Ascending aorta (tissue), 2 donors: ENCODE measurements at regions of chr7 and their contacts with region 1.

Region 1: GRCh38 chr7:47690902-47691558 is 109.1 kb upstream of the TNS3 start:
- DNase-seq: no peak
- H3K4me3 ChIP-seq: no peak overlapping the region
- H3K27ac ChIP-seq: peak overlapping the region; percentile 75 to 77
- H3K4me1 ChIP-seq: peaks cover 3 to 28% of the 10 kb centered on the region in 2 donors
- H3K27me3 ChIP-seq: no peaks in the 10 kb centered on the region
- CTCF ChIP-seq: no peak

Region 2: DNA sequence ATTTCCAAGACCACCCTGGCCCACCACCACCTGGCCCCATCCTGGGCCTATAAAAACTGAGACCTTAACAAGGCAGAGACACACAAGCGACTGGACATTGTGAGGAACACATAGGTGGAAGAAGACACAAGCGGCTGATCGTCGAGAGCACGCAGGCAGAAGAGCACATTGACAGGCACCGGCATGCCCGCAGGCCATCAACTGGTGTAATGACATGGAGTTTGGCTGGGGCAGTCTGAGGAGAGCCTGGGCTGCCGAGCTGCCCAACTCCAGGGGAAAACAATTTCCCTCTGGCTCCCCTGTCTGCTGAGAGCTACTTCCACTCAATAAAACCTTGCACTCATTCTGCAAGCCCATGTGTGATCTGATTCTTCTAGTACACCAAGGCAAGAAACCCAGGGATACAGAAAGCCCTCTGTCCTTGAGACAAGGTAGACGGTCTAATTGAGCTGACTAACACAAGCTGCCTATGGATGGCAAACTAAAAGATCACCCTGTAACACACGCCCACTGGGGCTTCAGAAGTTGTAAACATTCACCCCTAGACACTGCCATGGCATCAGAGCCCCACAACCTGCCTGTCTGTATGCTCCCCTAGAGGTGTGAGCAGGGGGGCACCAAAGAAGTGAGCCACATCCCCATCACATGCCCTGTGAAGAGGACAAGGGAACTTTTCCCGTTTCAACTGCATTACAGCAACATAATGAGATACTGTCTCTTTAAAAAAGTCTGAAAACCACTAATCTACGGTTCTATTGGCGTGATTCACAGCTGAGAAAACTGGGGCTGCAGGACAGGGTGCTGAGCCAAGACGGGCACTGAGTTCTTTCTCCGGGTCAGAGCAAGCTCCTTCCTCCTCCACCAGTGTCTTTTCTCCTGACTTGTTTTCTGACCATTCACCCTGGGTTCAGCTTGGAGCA is 90.6 kb before region 1 on chr7:
- intact Hi-C with region 1: loop called (anchors 5 kb)
- DNase-seq: peak in 1 of 2 donors; percentile 75
- H3K4me3 ChIP-seq: no peak overlapping the region
- H3K27ac ChIP-seq: no peak overlapping the region
- H3K4me1 ChIP-seq: peaks cover 7 to 35% of the 10 kb centered on the region in 2 donors
- H3K27me3 ChIP-seq: no peaks in the 10 kb centered on the region
- CTCF ChIP-seq: no peak

Region 3: DNA sequence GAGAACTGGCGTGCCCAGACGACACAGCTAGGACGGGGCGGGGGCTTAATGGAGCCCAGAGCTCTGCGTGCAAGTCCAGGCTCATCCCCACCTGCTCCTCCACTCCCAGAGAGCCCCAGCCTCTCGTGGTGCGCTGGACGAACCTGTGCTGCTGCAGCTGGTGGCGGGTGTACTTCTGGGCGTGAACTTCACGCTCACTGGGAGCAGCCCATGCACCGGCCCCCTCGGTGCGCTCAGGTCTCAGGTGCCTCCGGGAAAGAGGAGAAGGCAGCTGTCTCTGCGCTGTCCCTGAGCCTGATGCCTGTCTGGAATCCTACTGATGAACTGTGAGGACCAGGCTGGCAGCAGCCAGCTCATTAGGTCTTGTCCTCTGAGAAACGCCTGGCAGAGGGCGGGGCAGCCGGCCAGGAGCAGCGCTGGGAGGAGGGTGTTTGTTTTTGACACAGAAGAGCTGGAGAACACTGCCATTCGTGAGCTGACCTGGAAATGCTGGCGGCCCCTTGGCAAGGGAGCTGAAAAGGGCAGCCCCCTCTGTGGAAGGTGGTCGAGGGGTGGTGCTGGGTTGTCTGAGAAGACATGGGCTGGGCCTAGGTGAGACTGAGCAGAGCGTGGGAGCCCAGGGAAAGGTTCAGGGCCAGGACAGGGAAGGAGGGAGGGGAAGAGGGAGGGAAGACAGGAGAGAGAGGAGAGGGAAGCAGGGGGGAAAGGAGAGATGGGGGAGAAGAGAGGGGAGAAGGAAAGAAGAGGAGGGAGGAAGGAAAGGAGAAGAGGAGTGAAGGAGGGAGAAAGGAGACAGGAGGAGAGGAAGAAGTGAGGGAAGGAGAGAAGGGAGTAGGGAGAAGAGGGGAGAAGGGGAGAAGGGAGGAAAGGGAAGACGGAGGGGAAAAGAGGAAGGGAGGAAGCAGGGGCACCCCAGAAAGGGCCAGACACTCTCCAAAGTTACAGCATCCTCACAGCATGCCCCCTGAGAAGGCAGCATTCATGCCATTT is 55.6 kb before region 1 on chr7:
- intact Hi-C with region 1: loop called (anchors 5 kb)
- DNase-seq: peak in 1 of 2 donors; percentile 77
- H3K4me3 ChIP-seq: peak overlapping the region in 1 of 2 donors; percentile 35
- H3K27ac ChIP-seq: peak overlapping the region; percentile 83 to 85
- H3K4me1 ChIP-seq: peaks cover 18 to 31% of the 10 kb centered on the region in 2 donors
- H3K27me3 ChIP-seq: no peaks in the 10 kb centered on the region
- CTCF ChIP-seq: no peak

Region 4: GRCh38 chr7:47651355-47652317 is 39.4 kb before region 1 on chr7:
- intact Hi-C with region 1: loop called (anchors 5 kb)
- DNase-seq: peak in 1 of 2 donors; percentile 81
- H3K4me3 ChIP-seq: no peak overlapping the region
- H3K27ac ChIP-seq: peak overlapping the region; percentile 48 to 76
- H3K4me1 ChIP-seq: peaks cover 9 to 25% of the 10 kb centered on the region in 2 donors
- H3K27me3 ChIP-seq: no peaks in the 10 kb centered on the region
- CTCF ChIP-seq: no peak

Region 5: GRCh38 chr7:47669061-47669891 is 21.8 kb before region 1 on chr7:
- intact Hi-C with region 1: loop called (anchors 2 kb)
- DNase-seq: peak; percentile 74 to 92
- H3K4me3 ChIP-seq: peak overlapping the region; percentile 4 to 43
- H3K27ac ChIP-seq: peak overlapping the region; percentile 47 to 71
- H3K4me1 ChIP-seq: peaks cover 7 to 19% of the 10 kb centered on the region in 2 donors
- H3K27me3 ChIP-seq: no peaks in the 10 kb centered on the region
- CTCF ChIP-seq: peak in 1 of 3 experiments; percentile 13

Region 6: DNA sequence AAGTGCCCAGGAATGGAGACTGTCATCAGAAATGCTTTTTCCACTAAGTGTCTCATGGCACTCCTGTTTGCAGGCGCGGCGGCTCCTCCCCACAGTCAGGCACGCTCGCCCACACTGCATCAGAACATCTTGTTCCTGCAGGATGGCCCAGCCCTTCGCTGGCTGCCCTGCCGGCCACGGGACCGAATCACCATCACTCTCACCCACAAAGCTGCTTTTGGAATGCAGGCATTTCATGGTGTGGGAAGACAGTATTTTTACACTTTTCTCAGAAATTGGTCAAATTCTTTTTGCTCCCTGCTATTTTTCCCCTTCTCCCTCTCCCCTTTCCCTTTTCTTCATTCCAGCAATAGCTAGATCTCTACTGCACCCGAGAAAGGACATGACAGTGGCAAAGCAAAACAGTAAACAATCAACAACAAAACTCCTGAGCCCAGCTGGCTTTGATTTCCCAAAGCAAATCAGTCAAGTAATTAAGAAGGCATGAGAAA is 66.9 kb after region 1 on chr7:
- intact Hi-C with region 1: loop called (anchors 5 kb)
- DNase-seq: peak; percentile 63 to 93
- H3K4me3 ChIP-seq: no peak overlapping the region
- H3K27ac ChIP-seq: peak overlapping the region; percentile 70 to 86
- H3K4me1 ChIP-seq: peaks cover 0 to 12% of the 10 kb centered on the region in 2 donors
- H3K27me3 ChIP-seq: no peaks in the 10 kb centered on the region
- CTCF ChIP-seq: no peak

Region 7: GRCh38 chr7:47771336-47771989 is 80.4 kb after region 1 on chr7:
- intact Hi-C with region 1: loop called (anchors 1 kb)
- DNase-seq: peak in 1 of 2 donors; percentile 94
- H3K4me3 ChIP-seq: no peak overlapping the region
- H3K27ac ChIP-seq: peak overlapping the region; percentile 76 to 79
- H3K4me1 ChIP-seq: peaks cover 3 to 28% of the 10 kb centered on the region in 2 donors
- H3K27me3 ChIP-seq: no peaks in the 10 kb centered on the region
- CTCF ChIP-seq: peak in 2 of 3 experiments; percentile 32 to 37